Naive thymus-derived CD8-positive, alpha-beta T cell (primary cell): ENCODE measurements at regions of chr1 and their contacts with region 1.

Region 1: GRCh38 chr1:204162231-204163074 is 3.7 kb downstream of the REN start:
- DNase-seq: peak; percentile 65 to 88 (median 78)
- ATAC-seq: peak; percentile 98 to 100
- H3K4me3 Mint-ChIP-seq: no peak overlapping the region
- H3K27ac Mint-ChIP-seq: peak overlapping the region in 1 of 10 donors; percentile 91
- H3K4me1 Mint-ChIP-seq: peaks cover 0 to 2% (median 0%) of the 10 kb centered on the region in 4 donors
- H3K27me3 Mint-ChIP-seq: peaks cover 3 to 10% (median 6%) of the 10 kb centered on the region in 5 donors

Region 2: DNA sequence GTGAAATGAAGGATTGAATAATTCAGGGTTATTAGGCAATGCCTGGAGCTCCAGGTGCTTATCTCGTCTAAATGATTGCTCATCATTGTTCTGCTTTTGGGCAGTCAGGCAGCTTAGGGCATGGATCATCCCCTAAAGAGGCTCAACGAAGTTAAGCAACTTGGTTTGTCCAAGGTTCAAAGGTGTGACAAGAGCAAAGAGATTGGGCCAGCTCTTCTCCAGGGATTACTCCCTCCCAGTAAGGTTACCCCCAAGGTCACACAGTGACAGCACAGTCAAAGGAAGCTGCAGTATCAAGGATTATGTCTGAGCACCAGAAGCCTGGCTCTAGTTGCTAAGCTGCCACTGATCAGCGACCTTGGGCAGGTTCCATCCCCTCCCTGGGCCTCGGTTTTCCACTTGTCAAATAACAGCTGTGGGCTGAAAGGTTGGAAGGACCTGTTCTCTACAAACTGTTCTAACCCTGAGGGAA is 17.4 kb before region 1 on chr1:
- POLR2A ChIA-PET with region 1: no interaction called
- DNase-seq: no peak
- ATAC-seq: no peak
- H3K4me3 Mint-ChIP-seq: no peak overlapping the region
- H3K27ac Mint-ChIP-seq: no peak overlapping the region
- H3K4me1 Mint-ChIP-seq: peaks cover 0 to 5% (median 2%) of the 10 kb centered on the region in 4 donors
- H3K27me3 Mint-ChIP-seq: no peaks in the 10 kb centered on the region

Region 3: DNA sequence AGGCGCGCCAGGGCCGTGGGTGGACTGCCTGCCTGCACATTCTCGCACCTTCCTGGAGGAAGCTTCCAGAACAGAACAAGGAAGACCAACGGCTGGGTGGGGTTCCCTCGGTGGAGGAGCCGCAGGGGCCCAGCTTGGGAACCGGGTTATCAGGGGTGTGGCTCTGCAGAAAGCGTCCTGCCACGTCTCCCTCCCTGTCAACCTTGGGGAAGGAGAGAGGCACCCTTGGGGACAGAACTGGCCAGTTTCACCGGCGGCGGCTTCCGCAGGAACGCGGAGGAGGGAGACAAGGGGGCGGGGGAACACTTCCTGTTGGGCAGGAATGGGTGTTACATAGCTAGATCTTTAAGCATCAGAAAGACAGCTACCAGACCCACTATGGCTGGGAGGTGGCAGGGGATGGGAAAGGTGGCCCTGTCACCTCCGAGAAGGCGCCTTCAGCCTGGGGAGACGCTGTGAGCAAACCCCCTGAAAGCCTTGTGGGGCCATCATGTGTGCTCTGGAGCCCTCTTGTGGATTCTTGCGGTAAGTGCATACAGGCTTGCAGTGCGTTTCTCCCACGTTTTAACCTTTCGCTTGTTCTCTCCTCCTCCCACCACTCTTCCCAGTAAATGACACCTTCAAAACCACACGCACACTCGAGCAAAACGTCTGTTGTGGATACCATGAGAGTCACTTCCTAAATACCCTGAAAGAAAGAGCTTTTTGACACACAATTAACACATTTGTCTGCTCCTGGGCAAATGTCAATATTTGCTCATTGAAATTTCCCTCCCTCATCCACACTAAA is 201.1 kb after region 1 on chr1:
- POLR2A ChIA-PET with region 1: interaction called, 13 read pairs
- DNase-seq: peak; percentile 52 to 87 (median 71)
- ATAC-seq: peak; percentile 91 to 92
- H3K4me3 Mint-ChIP-seq: peak overlapping the region; percentile 39 to 87 (median 78)
- H3K27ac Mint-ChIP-seq: peak overlapping the region; percentile 2 to 86 (median 54)
- H3K4me1 Mint-ChIP-seq: peaks cover 11 to 16% (median 13%) of the 10 kb centered on the region in 4 donors
- H3K27me3 Mint-ChIP-seq: peaks cover 0 to 12% (median 8%) of the 10 kb centered on the region in 5 donors